IMR-90 (cell line): ENCODE measurements at regions of chr21 and their contacts with region 1.

Region 1: DNA sequence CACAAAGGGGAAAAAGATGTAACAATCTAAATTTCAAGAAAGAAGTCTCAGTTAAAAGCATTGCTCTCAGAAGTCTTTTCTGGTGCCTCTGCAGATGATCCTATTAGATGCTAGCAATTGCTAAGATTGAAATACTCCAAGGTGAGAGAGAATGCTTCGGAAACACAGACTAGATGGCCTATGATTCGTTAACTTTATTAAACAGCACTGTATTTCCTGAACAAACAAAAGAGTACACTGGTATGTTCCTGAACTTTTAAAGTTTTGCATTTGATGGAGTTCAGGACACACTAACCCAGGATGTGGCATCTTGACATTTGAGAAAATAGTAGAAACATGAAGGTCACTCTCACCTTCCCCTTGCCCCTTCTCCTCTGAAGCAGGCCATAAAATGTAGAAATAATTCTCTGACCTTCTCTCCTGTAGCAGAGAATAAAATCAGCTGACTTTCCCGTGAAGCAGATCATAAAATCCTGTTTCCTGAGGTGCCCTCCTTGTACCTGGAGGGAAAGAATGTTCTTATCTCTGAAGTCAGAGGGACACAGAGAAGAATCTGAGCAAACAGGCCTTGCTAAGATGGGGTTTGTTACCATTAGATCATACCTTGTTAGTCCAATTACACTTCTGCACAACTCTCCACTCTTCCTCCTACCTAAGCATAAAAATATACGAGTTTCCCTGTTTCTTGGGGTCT is 142.9 kb upstream of the USP25 start:
- DNase-seq: no peak
- ATAC-seq: no peak
- H3K4me3 ChIP-seq: no peak overlapping the region
- H3K27ac ChIP-seq: no peak overlapping the region
- H3K4me1 ChIP-seq: no peaks in the 10 kb centered on the region
- H3K27me3 ChIP-seq: peaks cover 2% of the 10 kb centered on the region; the same call in 1 of the 2 replicates
- CTCF ChIP-seq: no peak
- POLR2A ChIP-seq: no peak
- RAD21 ChIP-seq: no peak

Region 2: DNA sequence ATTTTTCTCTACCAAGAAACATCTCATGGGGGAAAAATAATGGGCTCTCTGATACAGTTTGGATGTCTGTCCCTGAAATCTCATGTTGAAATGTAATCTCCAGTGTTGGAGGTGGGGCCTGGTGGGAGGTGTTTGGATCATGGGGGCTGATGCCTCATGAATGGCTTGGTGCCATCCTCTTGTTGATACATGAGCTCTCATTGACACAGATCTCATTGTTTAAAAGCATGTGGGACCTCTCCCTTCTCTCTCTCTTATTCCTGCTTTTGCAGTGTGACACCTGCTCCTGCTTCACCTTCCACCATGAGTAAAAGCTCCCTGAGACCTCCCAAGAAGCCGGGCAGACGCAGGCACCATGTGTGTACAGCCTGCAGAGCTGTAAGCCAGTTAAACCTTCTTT is 189.6 kb before region 1 on chr21:
- CTCF ChIA-PET with region 1: no interaction called
- POLR2A ChIA-PET with region 1: no interaction called
- dilution Hi-C with region 1: no loop called
- in situ Hi-C with region 1: no loop called
- intact Hi-C with region 1: no loop called
- DNase-seq: no peak
- ATAC-seq: no peak
- H3K4me3 ChIP-seq: no peak overlapping the region
- H3K27ac ChIP-seq: no peak overlapping the region
- H3K4me1 ChIP-seq: no peaks in the 10 kb centered on the region
- H3K27me3 ChIP-seq: no peaks in the 10 kb centered on the region
- CTCF ChIP-seq: no peak
- POLR2A ChIP-seq: no peak
- RAD21 ChIP-seq: no peak

Region 3: GRCh38 chr21:16551101-16551695 is 964.3 kb after region 1 on chr21:
- CTCF ChIA-PET with region 1: no interaction called
- POLR2A ChIA-PET with region 1: no interaction called
- dilution Hi-C with region 1: no loop called
- in situ Hi-C with region 1: no loop called
- intact Hi-C with region 1: loop called (anchors 5 kb)
- DNase-seq: no peak
- ATAC-seq: no peak
- H3K4me3 ChIP-seq: no peak overlapping the region
- H3K27ac ChIP-seq: no peak overlapping the region
- H3K4me1 ChIP-seq: peaks cover 2% of the 10 kb centered on the region; the same call in 1 of the 2 replicates
- H3K27me3 ChIP-seq: no peaks in the 10 kb centered on the region
- CTCF ChIP-seq: no peak
- POLR2A ChIP-seq: no peak
- RAD21 ChIP-seq: no peak